GM12878 (cell line): ENCODE measurements at regions of chr5 and their contacts with region 1.

Region 1: GRCh38 chr5:5795074-5795771 is 372.7 kb downstream of the ICE1 start:
- DNase-seq: no peak
- ATAC-seq: no peak
- H3K4me3 ChIP-seq: no peak overlapping the region
- H3K27ac ChIP-seq: no peak overlapping the region
- H3K4me1 ChIP-seq: no peaks in the 10 kb centered on the region
- H3K27me3 ChIP-seq: no peaks in the 10 kb centered on the region
- CTCF ChIP-seq: no peak
- EP300 ChIP-seq: no peak
- POLR2A ChIP-seq: no peak
- RAD21 ChIP-seq: no peak

Region 2: DNA sequence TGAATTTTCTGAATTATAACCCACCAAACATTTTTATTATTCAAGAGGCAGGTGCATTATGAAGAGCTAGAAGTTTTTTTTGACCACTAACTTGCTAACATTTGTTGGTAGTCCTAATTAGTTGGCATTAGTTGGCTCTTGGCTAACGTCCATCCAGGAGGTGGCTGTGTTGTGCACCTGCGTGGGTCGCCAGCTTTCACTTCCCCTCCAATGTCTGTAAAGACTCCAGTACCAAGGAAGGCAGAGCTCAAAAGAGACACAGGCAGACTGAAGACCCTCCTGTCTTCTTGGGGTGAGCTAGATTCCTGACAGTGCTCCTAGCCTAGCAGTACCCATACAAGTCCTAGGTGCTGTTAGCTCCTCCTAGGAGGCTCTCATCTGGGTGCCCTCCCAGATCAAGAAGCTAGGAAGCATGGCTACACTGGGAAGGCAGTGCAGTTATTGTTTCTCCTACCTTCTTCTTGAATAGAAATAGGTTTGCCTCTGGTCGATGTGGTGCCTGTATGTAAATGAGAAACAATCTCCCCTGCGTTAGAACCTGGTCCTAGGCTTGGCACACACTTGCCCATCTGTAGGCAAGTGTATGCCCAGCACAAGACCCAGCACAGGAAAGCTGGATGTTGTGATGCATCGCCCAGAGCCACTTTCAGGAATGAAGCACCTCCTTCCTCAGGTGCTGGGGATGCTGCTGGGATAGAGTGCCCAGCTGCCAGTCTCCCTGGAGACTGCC is 181.8 kb before region 1 on chr5:
- CTCF ChIA-PET with region 1: no interaction called
- POLR2A ChIA-PET with region 1: interaction called, 11 read pairs
- RAD21 ChIA-PET with region 1: no interaction called
- SMC1A ChIA-PET with region 1: no interaction called
- in situ Hi-C with region 1: no loop called
- intact Hi-C with region 1: no loop called
- DNase-seq: peak; percentile 2
- ATAC-seq: peak; percentile 56
- H3K4me3 ChIP-seq: no peak overlapping the region
- H3K27ac ChIP-seq: no peak overlapping the region
- H3K4me1 ChIP-seq: peaks cover 3% of the 10 kb centered on the region; the same call in 1 of the 2 replicates
- H3K27me3 ChIP-seq: no peaks in the 10 kb centered on the region
- CTCF ChIP-seq: no peak
- EP300 ChIP-seq: no peak
- POLR2A ChIP-seq: no peak
- RAD21 ChIP-seq: no peak